ENCODE measurements at regions of chr10 and their contacts with region 1.

Region 1: DNA sequence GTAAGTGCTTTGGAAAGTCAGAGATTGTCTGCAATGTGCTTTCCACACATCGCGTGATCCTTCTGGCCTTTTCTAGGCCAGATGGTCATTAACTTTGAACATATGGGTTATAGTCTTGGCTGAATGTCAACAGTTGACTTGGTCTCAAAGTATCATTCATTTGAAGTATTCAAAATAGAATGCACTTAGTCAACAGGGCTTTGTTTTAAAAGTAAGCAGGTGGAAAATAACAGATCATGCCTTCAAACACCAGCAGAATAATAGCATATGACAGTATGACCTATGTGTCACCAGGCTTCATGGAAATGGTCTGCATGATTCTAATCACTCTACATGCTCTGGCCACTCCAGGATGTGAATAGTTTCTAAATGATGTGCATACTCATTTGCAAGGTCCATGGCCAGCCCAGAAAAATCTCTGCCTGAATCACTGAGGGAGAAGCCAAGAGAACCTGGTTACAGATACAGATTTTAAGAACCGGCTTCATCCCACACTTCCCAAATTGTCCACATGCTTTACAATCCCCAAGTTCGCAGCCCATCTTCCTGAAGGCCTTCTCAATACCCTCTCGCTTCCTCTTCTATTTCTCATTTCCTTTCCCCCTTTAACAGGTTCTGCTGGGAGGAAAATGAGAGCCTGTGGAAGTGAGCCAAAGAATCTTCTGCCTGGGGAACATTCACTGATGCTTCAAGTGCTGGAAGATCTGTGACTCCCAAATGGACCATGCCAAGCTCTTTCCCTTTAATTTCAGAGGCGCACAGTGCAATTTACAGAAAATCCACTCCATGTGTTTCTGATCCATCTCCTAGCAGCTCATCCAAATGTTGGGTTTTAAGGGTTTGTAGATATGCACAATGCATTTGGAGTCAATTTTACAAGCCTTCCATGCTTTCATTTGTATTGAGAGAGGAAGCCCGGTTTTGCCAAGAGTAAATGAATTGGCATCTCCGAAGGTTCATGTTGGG is 122.8 kb upstream of the GDF10 start:
- DNase-seq: no peak
- ATAC-seq: peak; percentile 68
- H3K4me3 Mint-ChIP-seq: no peak overlapping the region
- H3K27ac Mint-ChIP-seq: no peak overlapping the region
- H3K4me1 Mint-ChIP-seq: peaks cover 8% of the 10 kb centered on the region
- H3K27me3 Mint-ChIP-seq: no peaks in the 10 kb centered on the region
- CTCF ChIP-seq: no peak

Region 2: DNA sequence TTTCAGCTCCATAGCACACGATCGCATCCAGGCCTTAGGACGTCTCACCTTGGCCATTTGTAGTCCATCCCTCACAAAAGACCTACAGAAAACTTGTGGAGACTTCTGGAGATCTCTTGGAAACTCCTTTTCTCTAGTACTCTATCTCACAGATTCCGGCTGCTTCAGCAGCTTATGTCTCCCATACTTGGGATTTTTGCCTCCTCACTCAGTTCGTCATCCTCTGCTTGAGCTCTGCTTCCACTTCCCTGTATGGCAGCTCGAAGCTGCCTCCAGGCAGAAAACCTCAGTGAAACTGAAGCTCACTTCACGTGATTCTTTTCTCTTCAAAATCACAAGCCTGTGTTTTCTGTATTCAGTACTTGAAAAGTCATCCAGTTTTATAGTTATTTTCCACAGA is 55.8 kb before region 1 on chr10:
- CTCF ChIA-PET with region 1: no interaction called
- POLR2A ChIA-PET with region 1: no interaction called
- intact Hi-C with region 1: loop called (anchors 10 kb)
- DNase-seq: no peak
- ATAC-seq: no peak
- H3K4me3 Mint-ChIP-seq: no peak overlapping the region
- H3K27ac Mint-ChIP-seq: no peak overlapping the region
- H3K4me1 Mint-ChIP-seq: peaks cover 7% of the 10 kb centered on the region
- H3K27me3 Mint-ChIP-seq: no peaks in the 10 kb centered on the region
- CTCF ChIP-seq: no peak

Region 3: DNA sequence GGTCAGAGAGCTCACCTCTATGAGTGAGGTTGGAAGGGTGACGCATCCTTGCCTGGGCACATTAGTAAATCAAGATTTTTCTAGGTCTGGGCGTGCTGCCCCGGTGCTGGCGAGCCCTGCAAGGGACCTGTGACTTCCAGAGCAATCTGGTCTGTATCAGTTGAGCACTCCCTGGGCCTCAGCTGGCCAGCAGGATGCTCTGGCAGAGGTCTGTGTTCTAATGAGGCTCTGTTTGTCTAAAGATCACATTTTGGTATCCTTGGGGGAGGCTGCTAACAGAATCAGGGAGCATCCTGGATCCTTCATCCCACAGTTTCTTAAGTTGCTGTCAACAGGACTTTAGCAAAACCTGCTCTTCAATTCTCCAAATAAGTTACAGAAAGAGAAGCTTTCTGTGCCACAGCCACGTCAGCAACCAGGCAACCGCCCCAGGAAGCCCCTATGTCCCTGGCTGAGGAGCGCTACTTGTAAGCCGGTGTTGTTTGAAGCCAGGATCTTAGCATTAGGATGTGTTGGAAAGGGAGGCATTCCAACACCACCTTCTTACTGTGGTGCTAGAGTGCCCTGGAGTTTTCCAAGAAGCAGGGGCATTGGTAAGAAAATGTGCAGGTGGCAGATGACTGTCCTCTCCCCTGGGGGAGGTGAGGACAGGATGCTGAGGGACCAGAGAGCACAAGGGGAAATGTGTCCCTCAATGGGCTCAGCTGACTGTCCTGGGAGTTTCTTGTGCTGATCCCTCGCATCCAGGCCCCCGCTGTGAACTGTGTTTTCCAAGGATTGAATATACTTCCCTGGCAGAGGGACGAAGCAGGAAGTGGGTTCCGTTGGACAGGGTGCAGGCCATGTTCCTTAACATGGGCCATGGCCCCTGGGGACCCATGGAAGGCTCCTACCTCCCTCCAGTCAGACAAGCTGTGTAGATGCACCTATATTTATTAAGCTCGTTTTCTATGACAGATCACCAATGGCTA is 17.0 kb before region 1 on chr10:
- CTCF ChIA-PET with region 1: no interaction called
- POLR2A ChIA-PET with region 1: no interaction called
- intact Hi-C with region 1: no loop called
- DNase-seq: no peak
- ATAC-seq: no peak
- H3K4me3 Mint-ChIP-seq: no peak overlapping the region
- H3K27ac Mint-ChIP-seq: no peak overlapping the region
- H3K4me1 Mint-ChIP-seq: peaks cover 12% of the 10 kb centered on the region
- H3K27me3 Mint-ChIP-seq: no peaks in the 10 kb centered on the region
- CTCF ChIP-seq: no peak

Measured in activated CD8-positive, alpha-beta T cell treated with anti-CD3 and anti-CD28 coated beads for 36 hours (primary cell).